Endothelial cell of umbilical vein (primary cell): ENCODE measurements at regions of chr3 and their contacts with region 1.

Region 1: GRCh38 chr3:193701904-193702635 is 109.1 kb downstream of the OPA1 start:
- DNase-seq: no peak
- H3K4me3 ChIP-seq: no peak overlapping the region
- H3K27ac ChIP-seq: no peak overlapping the region
- H3K4me1 ChIP-seq: no peaks in the 10 kb centered on the region
- H3K27me3 ChIP-seq: no peaks in the 10 kb centered on the region
- CTCF ChIP-seq: no peak
- POLR2A ChIP-seq: no peak

Region 2: DNA sequence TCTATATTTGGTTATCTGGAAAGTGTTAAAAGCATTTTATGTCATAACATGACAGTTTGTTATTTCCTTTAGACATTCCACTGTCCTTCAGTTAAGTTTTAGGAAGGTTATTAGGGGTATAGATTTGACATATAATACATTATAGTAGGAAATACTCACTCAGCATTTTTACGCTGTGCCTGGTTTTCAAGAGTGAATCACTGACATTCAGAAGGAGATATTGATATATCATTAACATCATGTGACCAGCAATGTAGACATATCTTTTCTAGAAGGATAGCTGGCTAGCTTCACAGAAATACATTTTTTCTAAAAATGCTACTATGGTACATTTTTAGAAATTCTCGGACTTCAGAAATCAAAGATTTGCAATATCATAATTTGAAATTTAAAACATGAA is 51.5 kb before region 1 on chr3:
- CTCF ChIA-PET with region 1: no interaction called
- POLR2A ChIA-PET with region 1: no interaction called
- dilution Hi-C with region 1: no loop called
- intact Hi-C with region 1: loop called (anchors 2 kb)
- DNase-seq: no peak
- H3K4me3 ChIP-seq: no peak overlapping the region
- H3K27ac ChIP-seq: no peak overlapping the region
- H3K4me1 ChIP-seq: no peaks in the 10 kb centered on the region
- H3K27me3 ChIP-seq: no peaks in the 10 kb centered on the region
- CTCF ChIP-seq: no peak
- POLR2A ChIP-seq: no peak

Region 3: GRCh38 chr3:193665370-193665989 is 36.6 kb before region 1 on chr3:
- CTCF ChIA-PET with region 1: no interaction called
- POLR2A ChIA-PET with region 1: no interaction called
- dilution Hi-C with region 1: no loop called
- intact Hi-C with region 1: no loop called
- DNase-seq: peak; percentile 57
- H3K4me3 ChIP-seq: no peak overlapping the region
- H3K27ac ChIP-seq: no peak overlapping the region
- H3K4me1 ChIP-seq: no peaks in the 10 kb centered on the region
- H3K27me3 ChIP-seq: no peaks in the 10 kb centered on the region
- CTCF ChIP-seq: peak in 1 of 2 donors; percentile 22
- POLR2A ChIP-seq: no peak

Region 4: DNA sequence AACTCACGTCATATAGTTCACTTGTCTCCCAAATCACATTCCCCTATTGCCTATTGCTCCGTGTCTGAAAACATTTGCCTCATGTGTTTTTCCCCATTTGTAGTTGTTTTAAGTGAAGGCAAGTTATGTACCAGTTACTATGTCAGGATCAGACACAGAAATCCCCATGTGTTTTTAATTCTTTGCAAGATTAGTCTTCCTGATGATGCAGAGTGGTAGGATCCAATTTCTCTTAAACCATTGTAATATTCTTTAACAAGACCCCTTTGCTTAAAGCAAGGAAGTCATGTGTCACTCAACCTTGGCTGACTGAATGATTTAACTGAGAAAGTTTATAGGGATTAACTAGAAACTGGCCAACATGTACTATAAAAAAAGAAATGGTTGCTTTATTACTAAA is 55.4 kb after region 1 on chr3:
- CTCF ChIA-PET with region 1: no interaction called
- POLR2A ChIA-PET with region 1: interaction called, 11 read pairs
- dilution Hi-C with region 1: no loop called
- intact Hi-C with region 1: no loop called
- DNase-seq: no peak
- H3K4me3 ChIP-seq: no peak overlapping the region
- H3K27ac ChIP-seq: no peak overlapping the region
- H3K4me1 ChIP-seq: peaks cover 3% of the 10 kb centered on the region
- H3K27me3 ChIP-seq: peaks cover 9 to 10% of the 10 kb centered on the region in 2 experiments
- CTCF ChIP-seq: no peak
- POLR2A ChIP-seq: no peak

Region 5: DNA sequence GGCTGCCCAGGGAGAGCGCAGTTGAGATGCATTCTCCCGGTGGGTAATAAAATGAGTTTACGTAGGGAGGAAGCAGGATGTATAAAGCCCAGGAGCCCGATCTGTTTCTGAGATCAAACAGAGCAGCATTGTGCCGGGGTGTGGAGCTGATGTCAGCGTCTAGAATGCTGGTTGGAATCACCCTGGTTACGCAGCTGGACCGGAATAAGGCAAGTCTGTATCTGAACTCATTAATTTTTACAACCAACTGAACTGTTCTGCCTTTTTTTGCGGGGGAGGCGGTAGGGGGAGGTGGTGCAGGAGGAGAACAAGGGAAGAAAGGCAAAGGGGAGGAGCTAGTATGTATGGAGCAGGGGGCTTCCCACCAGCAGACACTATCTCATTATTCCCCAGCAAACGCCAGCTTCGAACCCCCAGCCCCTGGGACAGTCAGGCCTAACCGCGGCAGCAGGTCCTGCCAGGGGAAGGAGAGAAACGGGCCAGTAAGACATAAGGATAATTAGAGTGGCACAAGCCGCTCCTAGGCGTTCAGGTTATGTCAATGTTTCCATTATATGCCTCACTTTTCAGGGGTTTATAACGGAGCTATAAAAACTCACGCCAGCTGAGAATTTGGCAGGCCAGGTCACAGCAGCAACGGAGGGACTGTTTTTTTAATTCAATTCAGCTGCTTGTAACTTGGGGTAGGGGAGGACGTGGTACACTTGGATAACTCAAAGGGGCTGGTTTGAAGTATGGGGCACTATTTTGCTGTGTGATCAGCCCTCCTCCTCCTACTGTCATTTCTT is 258.6 kb after region 1 on chr3:
- CTCF ChIA-PET with region 1: no interaction called
- POLR2A ChIA-PET with region 1: no interaction called
- dilution Hi-C with region 1: no loop called
- intact Hi-C with region 1: no loop called
- DNase-seq: peak; percentile 67
- H3K4me3 ChIP-seq: no peak overlapping the region
- H3K27ac ChIP-seq: no peak overlapping the region
- H3K4me1 ChIP-seq: no peaks in the 10 kb centered on the region
- H3K27me3 ChIP-seq: peaks cover 26 to 33% of the 10 kb centered on the region in 2 experiments
- CTCF ChIP-seq: no peak
- POLR2A ChIP-seq: no peak